Activated CD4-positive, alpha-beta T cell treated with anti-CD3 and anti-CD28 coated beads, Interleukin-2, amount 10 ng/mL, durations not matched to agents 24 days and 14 days (primary cell): ENCODE measurements at regions of chr10 and their contacts with region 1.

Region 1: GRCh38 chr10:29496341-29497162 is 138.2 kb downstream of the SVIL start:
- DNase-seq: peak; percentile 89
- H3K4me3 Mint-ChIP-seq: no peak overlapping the region
- H3K27ac Mint-ChIP-seq: no peak overlapping the region
- H3K4me1 Mint-ChIP-seq: peaks cover 1% of the 10 kb centered on the region
- H3K27me3 Mint-ChIP-seq: no peaks in the 10 kb centered on the region

Region 2: DNA sequence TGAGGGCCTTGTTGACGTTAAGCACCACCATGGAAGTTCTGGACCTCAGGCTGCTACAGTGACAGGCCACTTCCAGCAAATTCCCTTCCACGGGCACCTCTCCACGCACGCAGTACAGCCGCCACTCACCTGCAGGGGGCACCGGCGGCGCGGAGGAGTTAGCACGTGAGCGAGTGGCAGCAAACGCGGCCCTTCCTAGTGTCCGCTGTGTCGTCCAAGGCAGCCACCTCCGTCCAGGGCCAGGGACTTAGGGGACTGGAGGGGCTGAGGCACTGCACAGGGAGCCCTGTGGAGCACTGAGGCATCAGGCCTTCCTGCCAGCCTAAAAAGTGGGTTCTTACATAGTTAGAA is 26.2 kb before region 1 on chr10:
- intact Hi-C with region 1: loop called (anchors 2 kb)
- DNase-seq: peak; percentile 70
- H3K4me3 Mint-ChIP-seq: no peak overlapping the region
- H3K27ac Mint-ChIP-seq: no peak overlapping the region
- H3K4me1 Mint-ChIP-seq: peaks cover 8% of the 10 kb centered on the region
- H3K27me3 Mint-ChIP-seq: no peaks in the 10 kb centered on the region